Heart right ventricle (tissue), 16 donors: ENCODE measurements at regions of chr2 and their contacts with region 1.

Region 1: GRCh38 chr2:187194049-187194448 is 254.0 kb downstream of the CALCRL start:
- DNase-seq: no peak
- ATAC-seq: no peak
- H3K4me3 ChIP-seq: no peak overlapping the region
- H3K27ac ChIP-seq: no peak overlapping the region
- H3K4me1 ChIP-seq: no peaks in the 10 kb centered on the region
- H3K27me3 ChIP-seq: no peaks in the 10 kb centered on the region
- CTCF ChIP-seq: no peak

Region 2: GRCh38 chr2:186751790-186752189 is 442.3 kb before region 1 on chr2:
- intact Hi-C with region 1: no loop called
- DNase-seq: no peak
- ATAC-seq: no peak
- H3K4me3 ChIP-seq: no peak overlapping the region
- H3K27ac ChIP-seq: no peak overlapping the region
- H3K4me1 ChIP-seq: no peaks in the 10 kb centered on the region
- H3K27me3 ChIP-seq: no peaks in the 10 kb centered on the region
- CTCF ChIP-seq: no peak

Region 3: GRCh38 chr2:187215532-187216240 is 21.6 kb after region 1 on chr2:
- intact Hi-C with region 1: no loop called
- DNase-seq: no peak
- ATAC-seq: no peak
- H3K4me3 ChIP-seq: no peak overlapping the region
- H3K27ac ChIP-seq: no peak overlapping the region
- H3K4me1 ChIP-seq: peaks cover 0 to 15% (median 0%) of the 10 kb centered on the region in 9 donors
- H3K27me3 ChIP-seq: no peaks in the 10 kb centered on the region
- CTCF ChIP-seq: no peak

Region 4: DNA sequence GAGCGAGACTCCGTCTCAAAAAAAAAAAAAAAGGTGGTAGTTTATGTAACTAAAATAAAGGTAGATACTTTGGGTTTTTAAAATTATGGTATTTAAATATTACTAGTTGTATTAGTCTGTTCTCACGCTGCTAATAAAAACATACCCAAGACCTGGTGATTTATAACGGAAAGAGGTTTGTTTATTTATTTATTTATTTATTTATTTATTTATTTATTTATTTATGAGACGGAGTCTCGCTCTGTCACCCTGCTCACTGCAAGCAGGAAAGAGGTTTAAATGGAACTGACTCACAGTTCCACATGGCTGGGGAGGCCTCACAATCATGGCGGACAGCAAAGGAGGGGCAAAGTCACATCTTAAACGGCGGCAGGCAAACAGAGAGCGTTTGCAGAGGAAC is 58.0 kb after region 1 on chr2:
- intact Hi-C with region 1: loop called in 1 of 10 experiments (anchors 2 kb)
- DNase-seq: no peak
- ATAC-seq: no peak
- H3K4me3 ChIP-seq: no peak overlapping the region
- H3K27ac ChIP-seq: no peak overlapping the region
- H3K4me1 ChIP-seq: no peaks in the 10 kb centered on the region
- H3K27me3 ChIP-seq: no peaks in the 10 kb centered on the region
- CTCF ChIP-seq: no peak